ENCODE measurements at regions of chr2 and their contacts with region 1.

Region 1: DNA sequence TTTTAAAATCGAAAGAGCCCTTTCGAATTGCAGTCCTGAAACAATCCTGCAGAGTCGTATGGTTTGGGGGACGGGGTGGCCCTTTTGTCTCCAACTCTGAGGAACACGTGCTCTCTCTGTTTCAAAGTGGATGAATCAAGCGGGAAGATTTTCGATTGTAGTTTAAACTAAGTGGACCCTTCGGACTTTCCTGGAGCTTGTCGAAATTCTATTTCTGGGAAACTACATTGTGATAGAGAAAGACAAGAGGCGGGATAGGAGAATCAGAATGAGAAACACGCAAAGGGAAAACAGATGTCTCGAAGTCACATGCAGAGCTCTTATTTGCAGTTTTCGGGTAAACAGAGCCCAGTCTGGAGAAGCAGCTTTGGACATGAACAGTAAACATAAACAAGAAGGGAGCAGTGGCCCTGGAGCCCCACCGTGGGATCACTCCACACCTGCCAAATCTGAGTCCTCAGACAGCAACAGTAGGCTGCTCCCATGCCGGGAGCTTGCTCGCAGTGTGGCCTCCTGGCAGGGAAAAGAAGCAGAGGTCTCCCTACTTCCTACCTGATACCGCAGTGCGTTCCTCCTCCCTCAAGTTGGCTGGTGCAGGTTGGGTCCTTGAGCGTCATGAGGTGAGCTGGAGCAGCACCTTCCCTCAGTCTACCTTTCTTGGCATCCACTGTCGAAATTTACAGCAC is 202.4 kb downstream of the SLC4A3 start:
- DNase-seq: no peak
- ATAC-seq: no peak
- H3K4me3 ChIP-seq: no peak overlapping the region
- H3K27ac ChIP-seq: no peak overlapping the region
- H3K4me1 ChIP-seq: no peaks in the 10 kb centered on the region
- H3K27me3 ChIP-seq: no peaks in the 10 kb centered on the region
- CTCF ChIP-seq: no peak

Region 2: GRCh38 chr2:219744600-219744999 is 85.2 kb before region 1 on chr2:
- intact Hi-C with region 1: loop called in 4 of 10 experiments (anchors 5 kb)
- DNase-seq: no peak
- ATAC-seq: no peak
- H3K4me3 ChIP-seq: no peak overlapping the region
- H3K27ac ChIP-seq: peak overlapping the region in 3 of 10 donors; percentile 41 to 51 (median 44)
- H3K4me1 ChIP-seq: peaks cover 0 to 22% (median 13%) of the 10 kb centered on the region in 9 donors
- H3K27me3 ChIP-seq: no peaks in the 10 kb centered on the region
- CTCF ChIP-seq: no peak

Measured in heart right ventricle (tissue), 16 donors.